HEK293 (cell line): ENCODE measurements at regions of chr12 and their contacts with region 1.

Region 1: DNA sequence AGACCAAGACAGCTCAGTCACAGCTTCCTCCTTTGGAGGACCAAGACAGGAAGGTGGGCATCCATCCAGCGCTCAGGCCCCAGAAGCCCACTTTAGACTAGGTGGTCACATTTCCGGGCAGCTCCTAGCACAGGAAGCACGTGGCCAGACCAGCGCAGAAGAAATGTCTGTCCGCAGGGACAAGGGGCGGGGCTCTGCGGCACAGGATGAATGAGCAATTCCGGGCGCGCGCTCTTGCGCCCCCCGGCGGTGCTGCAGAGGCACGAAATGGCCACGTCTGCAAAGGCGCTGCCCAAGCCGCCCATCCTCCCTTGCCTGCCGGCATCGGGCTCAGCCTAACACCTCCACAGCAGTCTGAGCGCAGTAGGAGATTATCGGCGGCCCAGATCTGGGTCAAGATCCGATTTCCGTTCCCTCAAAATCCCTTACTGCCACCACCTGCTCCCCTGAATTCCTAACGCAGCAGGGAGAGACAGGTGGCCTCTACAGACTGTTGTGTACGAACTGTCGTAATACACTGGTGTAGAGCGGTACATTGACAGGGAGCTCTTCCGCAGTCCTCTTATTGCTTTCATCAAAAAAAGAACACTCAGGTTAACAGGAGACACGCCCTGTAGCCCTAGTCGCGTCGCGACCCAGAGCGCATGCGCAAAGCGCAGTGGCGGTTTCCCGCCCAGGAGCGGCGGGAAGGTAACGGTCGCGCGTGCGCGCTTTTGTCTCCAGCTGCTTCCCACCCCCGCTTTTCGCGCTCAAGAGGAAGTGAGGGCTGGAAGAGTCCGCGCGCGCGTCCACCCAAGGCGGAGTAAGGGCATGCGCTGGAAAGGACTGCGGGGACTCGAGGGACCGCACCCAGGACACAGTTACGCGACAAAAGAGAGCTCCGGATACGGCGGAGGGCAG is 794 bp downstream of the TUBA1B start:
- H3K4me3 ChIP-seq: peak overlapping the region; percentile 95
- H3K27ac ChIP-seq: peak overlapping the region; percentile 99
- H3K4me1 ChIP-seq: peaks cover 11% of the 10 kb centered on the region
- CTCF ChIP-seq: peak; percentile 99

Region 2: GRCh38 chr12:49060237-49061156 is 69.9 kb before region 1 on chr12 and contains the start of gene KMT2D:
- CTCF ChIA-PET with region 1: interaction called, 19 read pairs
- POLR2A ChIA-PET with region 1: interaction called, 26 read pairs
- H3K4me3 ChIP-seq: peak within 1 kb of the TSS; percentile 95
- H3K27ac ChIP-seq: peak within 1 kb of the TSS; percentile 93
- H3K4me1 ChIP-seq: peaks cover 11% of the 10 kb centered on the region
- CTCF ChIP-seq: peak; percentile 94

Region 3: GRCh38 chr12:49098035-49098451 is 32.4 kb before region 1 on chr12:
- CTCF ChIA-PET with region 1: interaction called, 5 read pairs
- POLR2A ChIA-PET with region 1: interaction called, 28 read pairs
- H3K4me3 ChIP-seq: no peak overlapping the region
- H3K27ac ChIP-seq: no peak overlapping the region
- H3K4me1 ChIP-seq: no peaks in the 10 kb centered on the region
- CTCF ChIP-seq: peak; percentile 67

Region 4: DNA sequence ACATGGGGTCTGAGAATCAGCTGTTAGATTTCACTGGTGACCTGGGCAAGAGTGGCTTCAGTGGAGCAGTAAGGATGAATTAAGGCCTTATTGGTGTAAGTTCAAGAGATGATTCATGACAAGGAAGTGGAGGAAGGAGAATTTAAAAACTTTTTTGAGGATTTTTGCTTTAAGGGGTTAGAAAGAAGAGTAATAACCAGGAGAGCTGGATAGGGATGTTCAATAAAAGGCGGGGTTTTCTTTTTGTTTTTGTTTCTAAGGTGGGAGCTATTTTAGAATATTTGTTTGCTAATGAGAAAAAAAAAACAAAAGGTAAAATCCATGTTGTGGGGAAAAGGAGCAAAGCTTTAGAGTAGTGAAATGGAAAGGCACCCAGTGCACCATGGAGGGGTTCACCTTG is 16.0 kb after region 1 on chr12:
- CTCF ChIA-PET with region 1: interaction called, 4 read pairs
- POLR2A ChIA-PET with region 1: interaction called, 23 read pairs
- H3K4me3 ChIP-seq: no peak overlapping the region
- H3K27ac ChIP-seq: no peak overlapping the region
- H3K4me1 ChIP-seq: no peaks in the 10 kb centered on the region
- CTCF ChIP-seq: no peak

Region 5: GRCh38 chr12:49188914-49189367 is 58.5 kb after region 1 on chr12 and contains the start of gene TUBA1A:
- CTCF ChIA-PET with region 1: interaction called, 28 read pairs
- POLR2A ChIA-PET with region 1: interaction called, 134 read pairs
- H3K4me3 ChIP-seq: peak within 1 kb of the TSS; percentile 86
- H3K27ac ChIP-seq: peak within 1 kb of the TSS; percentile 94
- H3K4me1 ChIP-seq: peaks cover 6% of the 10 kb centered on the region; the same call in 1 of the 2 replicates
- CTCF ChIP-seq: no peak

Region 6: DNA sequence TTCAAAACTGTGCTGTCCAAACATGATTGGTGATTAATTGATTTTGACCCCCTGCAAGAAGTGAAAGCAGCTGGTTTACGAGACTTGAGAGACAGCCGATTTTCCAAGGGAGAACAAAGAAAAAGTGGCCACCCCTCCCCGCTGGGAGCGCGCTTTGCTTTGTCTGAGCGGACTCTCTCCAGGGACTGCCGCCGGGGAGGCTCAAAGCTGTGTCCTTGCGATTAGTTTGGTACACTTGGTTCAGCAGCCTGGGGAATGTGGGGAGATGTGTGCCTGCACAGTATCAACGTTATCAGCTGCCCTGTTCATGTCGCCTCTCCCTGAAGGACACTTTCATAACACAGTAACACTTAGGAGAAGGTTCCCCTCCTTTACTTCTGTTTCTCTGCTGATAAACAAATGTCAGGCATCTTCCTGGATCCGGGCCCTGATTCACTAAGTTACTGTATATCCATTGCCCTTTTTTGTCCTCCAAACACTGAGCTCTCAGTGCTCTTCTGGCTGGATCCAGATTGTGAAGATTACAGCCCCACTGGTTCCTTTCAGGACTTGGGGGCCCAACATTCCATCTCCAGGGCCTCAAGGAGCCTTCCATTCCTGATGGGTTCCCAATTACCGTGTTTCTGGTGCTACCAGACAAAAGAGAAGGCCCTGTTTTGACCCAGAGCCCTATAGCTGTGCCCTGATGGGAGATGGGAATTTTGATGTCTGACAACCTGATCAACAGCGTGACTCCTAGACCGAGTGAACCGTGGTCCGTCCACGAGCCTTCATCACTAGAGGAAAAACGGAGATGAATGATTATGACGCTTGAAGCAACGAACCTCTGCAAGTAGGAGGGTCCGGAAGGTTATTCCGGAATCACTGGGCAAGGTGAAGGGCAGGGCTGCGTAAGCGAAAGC is 102.8 kb after region 1 on chr12:
- CTCF ChIA-PET with region 1: interaction called, 15 read pairs
- POLR2A ChIA-PET with region 1: interaction called, 47 read pairs
- H3K4me3 ChIP-seq: no peak overlapping the region
- H3K27ac ChIP-seq: peak overlapping the region; percentile 6; the same call in 1 of the 2 replicates
- H3K4me1 ChIP-seq: peaks cover 2% of the 10 kb centered on the region; the same call in 1 of the 2 replicates
- CTCF ChIP-seq: peak; percentile 54; the same call in 1 of the 2 replicates